Left cardiac atrium (tissue), 4 donors: ENCODE measurements at regions of chr3 and their contacts with region 1.

Region 1: DNA sequence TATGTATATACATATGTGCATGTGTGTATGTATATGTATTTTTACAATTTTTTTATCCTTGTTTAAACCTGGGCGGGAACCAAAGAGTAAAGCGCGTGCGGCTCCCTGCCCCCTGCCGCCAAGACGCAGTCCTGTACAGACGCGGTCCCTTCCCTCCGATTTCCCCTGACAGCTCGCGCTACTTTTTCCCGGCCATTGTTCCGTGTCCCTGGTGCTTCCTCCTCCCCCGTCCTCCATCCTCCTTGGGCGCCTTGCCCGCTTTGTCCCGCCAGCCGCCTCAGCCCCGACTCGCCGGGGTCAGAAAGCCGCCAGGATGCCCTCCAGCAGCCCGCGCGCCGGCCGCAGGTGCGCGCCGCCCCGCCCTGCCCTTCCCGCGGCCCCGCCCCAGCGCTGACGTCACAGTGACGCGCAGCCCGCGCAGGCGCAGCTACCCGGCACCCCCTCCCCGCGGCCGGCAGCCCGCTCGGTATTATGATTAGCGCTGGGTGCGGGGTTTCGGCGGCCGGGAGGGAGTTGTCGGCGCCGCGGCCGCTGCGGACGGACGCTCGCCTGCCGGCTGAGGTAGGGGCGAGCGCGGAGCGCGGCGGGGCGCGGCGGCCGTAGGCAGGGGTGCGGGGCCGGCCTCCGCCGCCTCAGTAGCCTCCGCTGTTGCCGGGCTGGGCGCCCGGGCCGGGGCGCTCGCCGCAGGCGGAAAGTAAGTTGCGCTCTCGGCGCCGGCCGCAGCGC is at the start of gene SNRK:
- DNase-seq: peak; percentile 90
- ATAC-seq: peak; percentile 97 to 98
- total RNA-seq, gene SNRK: 20.2 to 29.3 TPM

Region 2: DNA sequence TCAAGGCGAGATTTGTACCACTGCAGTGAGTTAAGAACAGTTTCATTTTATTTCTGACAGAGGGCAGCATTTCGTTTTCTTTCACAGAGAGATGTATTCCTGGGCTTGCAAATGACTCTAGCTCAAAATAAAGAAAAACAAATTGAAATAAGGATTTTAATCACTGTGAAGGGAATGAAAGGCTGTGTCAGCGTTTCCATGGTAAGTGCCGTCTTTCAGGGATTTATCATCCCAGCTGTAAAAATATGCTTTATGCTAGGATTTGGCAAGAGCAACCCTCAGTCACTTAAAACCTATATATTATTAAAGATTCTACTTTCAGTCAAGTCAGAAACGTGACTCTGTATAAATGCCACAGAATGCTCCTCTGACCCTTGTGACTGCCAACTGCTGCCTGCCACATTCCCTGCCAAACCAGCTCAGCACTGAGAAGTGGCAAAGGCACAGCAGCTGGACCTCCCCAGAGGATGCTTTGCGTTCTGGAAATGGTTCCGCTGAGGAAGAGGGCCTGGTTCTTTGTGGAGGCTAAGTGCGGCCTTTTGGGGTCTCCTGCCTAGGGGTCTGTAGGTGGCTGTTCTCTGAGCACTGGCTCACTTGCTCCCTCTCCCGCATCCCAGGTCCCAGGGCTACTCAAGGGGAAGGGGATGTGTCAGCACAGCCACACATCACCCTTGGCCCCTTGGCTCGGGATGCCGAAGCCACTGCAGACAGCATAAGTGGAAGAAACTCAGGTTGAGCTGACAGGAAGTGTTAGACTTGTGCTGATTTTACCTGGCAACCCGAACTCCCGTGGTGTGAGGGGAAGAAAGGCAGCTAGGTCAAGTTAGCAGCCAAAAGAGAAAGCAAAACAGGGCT is 123.8 kb before region 1 on chr3:
- intact Hi-C with region 1: loop called (anchors 5 to 10 kb)
- DNase-seq: no peak
- ATAC-seq: peak; percentile 76 to 79

Region 3: GRCh38 chr3:43223670-43224364 is 62.5 kb before region 1 on chr3:
- intact Hi-C with region 1: loop called in 1 of 2 experiments (anchors 10 kb)
- DNase-seq: no peak
- ATAC-seq: no peak

Region 4: DNA sequence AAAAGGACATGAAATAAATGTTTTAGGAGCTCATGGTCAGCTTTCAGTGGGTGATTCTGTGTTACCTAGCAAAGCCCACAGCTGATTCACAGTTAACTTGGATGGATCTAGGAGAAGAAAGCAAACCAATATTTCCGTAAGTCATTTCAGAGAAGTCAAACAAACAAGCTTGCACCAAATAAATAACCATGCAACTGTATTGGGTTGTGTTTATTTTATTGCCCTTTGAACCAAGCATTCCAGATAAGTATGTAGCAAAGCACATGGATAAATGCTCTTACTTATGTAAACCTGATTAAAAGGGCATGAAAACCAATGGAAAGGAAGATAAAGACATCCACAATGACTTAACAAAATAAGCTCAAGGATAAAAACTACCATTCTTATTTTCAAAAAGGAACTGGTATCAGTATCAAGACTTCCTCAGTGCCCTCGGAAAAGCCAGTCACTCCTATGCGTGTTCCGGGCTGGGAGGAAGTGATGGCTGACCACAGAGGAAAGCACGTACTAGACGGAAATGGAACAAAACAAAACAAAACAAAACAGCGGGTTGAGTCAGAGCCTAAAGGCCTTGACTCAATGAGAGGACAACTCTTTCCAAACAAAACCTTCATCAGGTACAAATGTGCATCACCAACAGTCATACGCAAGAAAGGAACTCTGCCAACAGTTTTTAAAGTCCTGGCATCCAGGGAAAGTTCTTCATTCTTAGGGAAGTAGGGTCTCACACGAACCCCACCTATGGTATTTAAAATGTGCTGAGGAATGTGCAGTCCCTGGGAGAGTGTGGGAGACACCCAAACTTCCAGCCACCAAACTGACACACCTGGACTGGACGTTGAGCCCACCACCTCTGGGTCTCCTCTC is 103.3 kb after region 1 on chr3:
- intact Hi-C with region 1: loop called in 1 of 2 experiments (anchors 5 kb)
- DNase-seq: peak; percentile 75
- ATAC-seq: peak; percentile 73 to 75

Region 5: DNA sequence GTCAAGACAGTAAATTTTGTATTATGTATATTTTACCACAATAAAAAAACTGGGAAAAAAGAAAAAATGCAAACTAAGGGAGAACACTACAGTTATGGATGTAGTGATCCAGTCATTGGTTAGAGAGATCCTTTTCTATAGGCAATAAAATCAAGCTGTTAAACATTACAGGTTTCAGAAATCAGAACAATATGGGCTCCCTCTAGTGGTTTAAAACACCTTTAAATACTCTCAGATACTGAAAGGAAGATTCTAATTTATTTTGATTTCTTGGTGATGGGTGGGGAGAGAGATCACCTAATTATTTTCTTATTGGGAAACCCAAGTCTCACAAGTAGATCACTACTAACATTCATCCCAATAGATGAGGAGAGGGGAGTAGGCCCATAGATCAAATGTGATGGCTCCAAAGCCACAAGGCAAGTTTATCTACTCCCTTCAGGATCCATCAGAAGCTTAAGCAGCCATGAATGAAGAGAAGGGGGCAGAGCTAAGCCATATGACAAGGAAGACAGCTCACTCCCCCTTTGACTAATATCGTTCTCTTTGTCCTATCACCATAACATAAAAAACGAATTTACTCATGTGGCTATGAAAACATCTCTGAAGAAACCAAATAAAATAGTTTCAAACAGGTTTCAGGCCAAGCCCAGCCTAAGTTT is 216.9 kb after region 1 on chr3:
- intact Hi-C with region 1: loop called in 1 of 2 experiments (anchors 5 kb)
- DNase-seq: no peak
- ATAC-seq: peak in 1 of 2 donors; percentile 27